ENCODE measurements at regions of chr1 and their contacts with region 1.

Region 1: DNA sequence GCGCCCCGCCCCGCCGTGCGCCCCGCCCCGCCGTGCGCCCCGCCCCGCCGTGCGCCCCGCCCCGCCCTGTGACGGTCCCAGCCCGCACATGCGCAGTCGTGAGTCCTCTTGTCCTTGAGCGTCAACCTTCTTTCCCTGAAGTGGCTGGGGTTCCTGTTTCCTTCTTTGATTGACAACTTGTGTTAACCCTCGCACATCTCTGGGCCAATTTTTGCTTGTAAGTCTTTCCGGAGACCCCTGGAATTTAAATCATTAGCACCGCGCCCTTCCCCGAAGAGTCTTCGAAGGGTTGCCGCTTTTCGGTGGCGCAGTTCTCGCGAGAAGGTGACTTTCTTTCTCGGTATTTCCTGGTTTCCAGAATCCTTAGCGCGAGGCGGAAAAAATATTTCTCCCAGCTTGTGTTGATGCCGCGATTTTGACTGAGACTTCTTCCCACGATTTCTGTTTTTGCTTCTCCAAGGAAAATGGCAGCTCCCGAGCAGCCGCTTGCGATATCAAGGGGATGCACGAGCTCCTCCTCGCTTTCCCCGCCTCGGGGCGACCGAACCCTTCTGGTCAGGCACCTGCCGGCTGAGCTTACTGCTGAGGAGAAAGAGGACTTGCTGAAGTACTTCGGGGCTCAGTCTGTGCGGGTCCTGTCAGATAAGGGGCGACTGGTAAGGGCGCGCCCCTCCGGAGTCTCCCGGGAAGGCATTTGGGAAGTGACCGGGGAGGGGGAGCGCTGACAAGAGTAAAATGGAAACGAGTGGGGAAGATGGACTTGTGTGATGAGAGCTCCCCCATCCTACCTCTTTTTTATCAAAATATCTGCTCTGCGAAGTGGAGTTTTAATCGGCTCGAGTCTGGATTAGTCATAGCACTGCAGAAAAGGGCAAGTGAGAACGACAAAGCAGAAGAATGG is at the start of gene RNPC3:
- DNase-seq: peak; percentile 77 to 84
- ATAC-seq: peak; percentile 85 to 87
- H3K4me3 ChIP-seq: peak within 1 kb of the TSS; percentile 97 to 100 (median 98)
- H3K27ac ChIP-seq: peak within 1 kb of the TSS; percentile 92 to 99 (median 98)
- H3K4me1 ChIP-seq: peaks cover 35 to 44% of the 10 kb centered on the region in 2 donors
- H3K27me3 ChIP-seq: no peaks in the 10 kb centered on the region
- CTCF ChIP-seq: no peak
- POLR2A ChIP-seq: peak; percentile 41 to 53
- total RNA-seq, gene RNPC3: 6.5 to 55.2 (median 29.8) TPM

Region 2: GRCh38 chr1:103561643-103562395 is 36.0 kb after region 1 on chr1:
- in situ Hi-C with region 1: no loop called
- intact Hi-C with region 1: loop called (anchors 5 kb)
- DNase-seq: peak in 1 of 2 donors; percentile 36
- ATAC-seq: peak; percentile 95 to 96
- H3K4me3 ChIP-seq: peak overlapping the region; percentile 34 to 42 (median 40)
- H3K27ac ChIP-seq: peak overlapping the region; percentile 81 to 90 (median 85)
- H3K4me1 ChIP-seq: peaks cover 30 to 31% of the 10 kb centered on the region in 2 donors
- H3K27me3 ChIP-seq: no peaks in the 10 kb centered on the region
- CTCF ChIP-seq: no peak
- POLR2A ChIP-seq: peak in 1 of 2 donors; percentile 6

Region 3: GRCh38 chr1:104028416-104029035 is 502.7 kb after region 1 on chr1:
- in situ Hi-C with region 1: no loop called
- intact Hi-C with region 1: no loop called
- DNase-seq: no peak
- ATAC-seq: no peak
- H3K4me3 ChIP-seq: no peak overlapping the region
- H3K27ac ChIP-seq: no peak overlapping the region
- H3K4me1 ChIP-seq: no peaks in the 10 kb centered on the region
- H3K27me3 ChIP-seq: no peaks in the 10 kb centered on the region
- CTCF ChIP-seq: no peak
- POLR2A ChIP-seq: no peak